ENCODE measurements at regions of chr13 and their contacts with region 1.

Region 1: GRCh38 chr13:45370922-45371406 is 30.0 kb upstream of the TPT1 start:
- DNase-seq: peak; percentile 90
- ATAC-seq: peak; percentile 90
- H3K4me3 Mint-ChIP-seq: peak overlapping the region; percentile 44
- H3K27ac Mint-ChIP-seq: peak overlapping the region; percentile 50
- H3K4me1 Mint-ChIP-seq: peaks cover 35% of the 10 kb centered on the region
- H3K27me3 Mint-ChIP-seq: no peaks in the 10 kb centered on the region
- CTCF ChIP-seq: peak; percentile 95

Region 2: GRCh38 chr13:45142440-45143345 is 228.3 kb before region 1 on chr13:
- CTCF ChIA-PET with region 1: no interaction called
- POLR2A ChIA-PET with region 1: no interaction called
- DNase-seq: no peak
- ATAC-seq: no peak
- H3K4me3 Mint-ChIP-seq: no peak overlapping the region
- H3K27ac Mint-ChIP-seq: no peak overlapping the region
- H3K4me1 Mint-ChIP-seq: 0 out of 2 replicates have a peak, but pooled peaks cover 4% of the 10 kb centered on the region
- H3K27me3 Mint-ChIP-seq: no peaks in the 10 kb centered on the region
- CTCF ChIP-seq: no peak

Region 3: GRCh38 chr13:45340926-45341750 is 29.8 kb before region 1 on chr13 and contains the start of gene TPT1:
- CTCF ChIA-PET with region 1: interaction called, 24 read pairs
- POLR2A ChIA-PET with region 1: interaction called, 5 read pairs
- DNase-seq: peak; percentile 98
- ATAC-seq: peak; percentile 96
- H3K4me3 Mint-ChIP-seq: peak within 1 kb of the TSS; percentile 97
- H3K27ac Mint-ChIP-seq: peak within 1 kb of the TSS; percentile 100
- H3K4me1 Mint-ChIP-seq: peaks cover 38% of the 10 kb centered on the region
- H3K27me3 Mint-ChIP-seq: no peaks in the 10 kb centered on the region
- CTCF ChIP-seq: no peak
- total RNA-seq, gene TPT1: 1,861 to 2,091 TPM (median 2,076 TPM) in 3 replicates

Region 4: DNA sequence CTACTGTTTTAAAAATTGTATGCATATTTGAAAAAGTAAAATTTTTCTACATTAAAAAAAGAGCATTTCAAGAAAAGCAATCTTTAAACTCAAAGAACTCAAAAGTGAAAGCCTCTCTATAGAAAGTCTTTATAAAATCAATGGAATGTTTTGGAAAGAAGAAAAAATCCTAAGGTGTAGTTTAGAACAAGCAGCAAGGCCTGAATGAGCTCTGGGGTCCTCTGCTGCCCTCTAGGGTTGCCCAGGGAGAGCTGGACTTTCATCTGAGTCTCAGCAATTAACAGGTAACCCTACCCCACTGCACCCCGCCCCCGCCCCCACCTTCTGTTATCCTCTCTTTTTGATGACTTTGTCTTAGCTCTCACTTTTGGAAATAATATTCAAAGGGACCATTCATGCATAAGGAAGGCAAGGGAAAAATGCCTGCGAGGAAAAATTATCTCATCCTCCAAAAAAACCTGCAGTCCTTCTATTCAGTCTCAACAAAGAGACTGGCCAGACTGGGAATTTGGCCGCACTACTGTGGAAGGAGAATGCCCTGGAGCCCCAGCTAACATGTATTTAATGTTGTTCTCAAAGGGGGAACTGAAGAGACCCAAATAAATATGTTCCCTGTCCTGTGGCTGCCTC is 23.1 kb after region 1 on chr13:
- CTCF ChIA-PET with region 1: interaction called, 87 read pairs
- POLR2A ChIA-PET with region 1: interaction called, 4 read pairs
- DNase-seq: peak; percentile 63
- ATAC-seq: peak; percentile 98
- H3K4me3 Mint-ChIP-seq: no peak overlapping the region
- H3K27ac Mint-ChIP-seq: 0 out of 2 replicates have a peak overlapping the region, but pooled peaks have one; percentile 11
- H3K4me1 Mint-ChIP-seq: peaks cover 5% of the 10 kb centered on the region
- H3K27me3 Mint-ChIP-seq: no peaks in the 10 kb centered on the region
- CTCF ChIP-seq: peak; percentile 51

Region 5: GRCh38 chr13:45417790-45418534 is 47.0 kb after region 1 on chr13 and contains the start of gene SLC25A30:
- CTCF ChIA-PET with region 1: interaction called, 17 read pairs
- POLR2A ChIA-PET with region 1: no interaction called
- DNase-seq: peak; percentile 96
- ATAC-seq: peak; percentile 97
- H3K4me3 Mint-ChIP-seq: peak within 1 kb of the TSS; percentile 86
- H3K27ac Mint-ChIP-seq: peak within 1 kb of the TSS; percentile 93
- H3K4me1 Mint-ChIP-seq: peaks cover 11% of the 10 kb centered on the region
- H3K27me3 Mint-ChIP-seq: peaks cover 30% of the 10 kb centered on the region
- CTCF ChIP-seq: no peak
- total RNA-seq, gene SLC25A30: 8.2 to 9.8 TPM (median 8.6 TPM) in 3 replicates

Region 6: GRCh38 chr13:45490068-45490467 is 119.1 kb after region 1 on chr13:
- CTCF ChIA-PET with region 1: interaction called, 18 read pairs
- POLR2A ChIA-PET with region 1: no interaction called
- DNase-seq: no peak
- ATAC-seq: peak; percentile 69
- H3K4me3 Mint-ChIP-seq: no peak overlapping the region
- H3K27ac Mint-ChIP-seq: no peak overlapping the region
- H3K4me1 Mint-ChIP-seq: no peaks in the 10 kb centered on the region
- H3K27me3 Mint-ChIP-seq: no peaks in the 10 kb centered on the region
- CTCF ChIP-seq: no peak

Measured in WTC11 (cell line).